BJ (cell line): ENCODE measurements at regions of chr1 and their contacts with region 1.

Region 1: DNA sequence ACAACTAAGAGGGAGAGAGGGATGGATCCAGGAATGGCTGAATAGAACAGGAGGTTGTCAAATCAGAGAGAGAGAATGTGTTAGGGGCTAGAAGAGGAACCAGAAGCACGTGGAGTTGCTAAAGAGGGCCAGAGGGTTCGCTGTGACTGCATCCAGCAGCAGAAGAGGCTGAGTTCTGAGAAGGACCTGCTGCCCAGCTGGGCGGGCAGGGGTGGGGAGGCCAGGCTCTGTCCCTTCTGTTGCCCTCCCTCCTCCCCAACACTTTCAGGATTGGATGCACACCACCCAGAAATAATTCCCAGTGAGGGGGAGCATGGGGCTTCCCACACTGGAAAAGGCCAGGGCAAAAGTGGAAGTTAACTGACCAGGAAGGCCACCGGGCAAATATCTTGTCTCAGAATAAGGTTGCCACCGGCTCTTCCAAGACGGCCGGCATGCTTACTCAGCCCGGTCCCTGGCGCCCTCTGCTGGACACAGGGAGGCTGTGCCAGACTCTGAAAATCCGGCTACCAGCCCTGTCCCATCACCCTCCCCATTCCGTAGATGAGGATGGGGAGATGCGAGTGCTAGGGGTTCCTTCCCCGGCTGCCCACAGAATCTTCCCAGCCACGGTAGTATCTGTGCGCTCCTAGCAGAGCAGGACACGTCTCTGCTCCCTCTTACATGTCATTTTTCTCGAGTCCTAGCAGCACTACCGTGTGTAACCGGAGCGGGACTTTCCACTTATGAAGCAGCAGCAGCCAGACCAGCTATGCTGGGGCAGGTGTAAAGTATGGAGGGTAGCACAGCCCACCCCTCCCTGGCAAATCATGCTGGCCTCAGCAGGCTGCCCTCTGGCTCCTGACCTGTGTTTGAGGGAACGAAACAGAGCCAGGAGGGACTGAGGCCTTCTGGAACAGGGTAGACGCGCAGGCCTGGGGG is 46.8 kb upstream of the A3GALT2 start:
- DNase-seq: no peak
- H3K4me3 ChIP-seq: no peak overlapping the region
- H3K27me3 ChIP-seq: no peaks in the 10 kb centered on the region
- CTCF ChIP-seq: peak; percentile 97

Region 2: GRCh38 chr1:33349778-33350610 is 17.8 kb before region 1 on chr1:
- CTCF ChIA-PET with region 1: interaction called, 8 read pairs
- POLR2A ChIA-PET with region 1: interaction called, 10 read pairs
- DNase-seq: no peak
- H3K4me3 ChIP-seq: peak overlapping the region; percentile 82
- H3K27me3 ChIP-seq: no peaks in the 10 kb centered on the region
- CTCF ChIP-seq: no peak

Region 3: GRCh38 chr1:33388805-33389771 is 21.3 kb after region 1 on chr1:
- CTCF ChIA-PET with region 1: interaction called, 10 read pairs
- POLR2A ChIA-PET with region 1: no interaction called
- DNase-seq: peak; percentile 77
- H3K4me3 ChIP-seq: no peak overlapping the region
- H3K27me3 ChIP-seq: no peaks in the 10 kb centered on the region
- CTCF ChIP-seq: no peak

Region 4: DNA sequence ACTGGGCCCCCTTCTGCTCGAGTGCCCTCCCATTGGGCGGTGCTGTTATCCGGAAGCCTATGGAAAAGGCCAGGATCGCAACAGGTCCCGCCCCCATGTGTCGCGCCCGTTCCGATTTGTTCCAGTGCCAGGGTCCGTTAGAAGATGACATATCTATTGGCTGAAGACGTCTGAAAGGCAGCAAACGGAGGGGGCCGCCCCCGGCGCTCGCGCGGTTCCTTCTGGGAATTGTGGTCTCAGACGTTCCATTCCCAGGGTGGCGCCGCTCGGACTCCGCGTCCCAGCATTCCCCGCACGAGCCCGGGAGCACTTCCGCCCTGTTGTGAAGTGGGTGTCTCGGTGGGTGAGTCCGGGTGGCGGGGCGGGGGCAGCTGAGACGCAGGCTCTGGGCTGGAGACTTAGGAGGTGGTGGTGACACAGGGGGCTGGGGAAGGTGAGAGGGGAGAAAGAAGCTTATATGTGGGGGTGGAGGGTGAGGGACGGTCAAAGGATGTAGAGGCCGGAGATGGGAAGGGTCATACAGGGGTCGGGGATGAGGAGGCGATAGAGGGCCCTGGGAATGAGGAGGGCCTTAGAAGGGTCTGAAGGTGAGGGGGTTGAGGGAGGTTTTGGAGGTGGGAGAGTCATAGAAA is 104.7 kb after region 1 on chr1 and contains the start of gene ZSCAN20:
- CTCF ChIA-PET with region 1: interaction called, 65 read pairs
- POLR2A ChIA-PET with region 1: no interaction called
- DNase-seq: peak; percentile 94
- H3K4me3 ChIP-seq: peak within 1 kb of the TSS; percentile 66
- H3K27me3 ChIP-seq: no peaks in the 10 kb centered on the region
- CTCF ChIP-seq: no peak
- polyA plus RNA-seq, gene ZSCAN20: 2.9 and 3.4 TPM in 2 replicates

Region 5: DNA sequence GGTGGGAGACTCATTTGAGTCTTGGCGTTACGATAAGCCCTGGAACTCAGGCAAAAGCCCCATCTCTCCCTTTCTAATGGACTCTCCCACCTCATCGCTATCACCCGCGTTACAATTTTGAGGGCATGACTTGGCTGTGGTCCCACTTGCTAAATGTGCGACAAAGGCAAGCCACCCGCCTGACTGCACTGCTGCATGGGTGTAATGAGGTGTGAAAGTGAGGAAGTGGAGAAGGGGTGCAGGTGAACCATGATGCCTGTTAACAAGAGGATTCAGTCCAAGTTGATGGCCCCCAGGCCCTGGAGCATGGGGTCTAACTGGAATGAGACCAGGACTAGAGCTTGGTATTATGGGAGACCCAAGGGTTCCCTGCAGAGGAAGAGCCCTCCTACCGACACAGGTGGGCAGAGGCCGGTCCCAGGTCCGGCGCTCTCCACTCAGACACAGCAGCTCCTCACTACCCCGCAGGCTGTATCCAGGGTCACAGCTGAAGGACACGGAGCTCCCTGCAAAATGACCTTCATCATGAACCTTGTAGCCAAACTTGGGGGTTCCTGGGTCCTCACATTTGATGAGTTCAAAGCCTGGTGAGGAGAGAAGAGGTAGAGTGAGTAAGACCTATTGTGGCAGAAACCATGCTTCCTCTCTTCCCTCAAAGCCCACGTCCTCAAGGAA is 330.8 kb after region 1 on chr1:
- CTCF ChIA-PET with region 1: no interaction called
- POLR2A ChIA-PET with region 1: no interaction called
- DNase-seq: no peak
- H3K4me3 ChIP-seq: no peak overlapping the region
- H3K27me3 ChIP-seq: no peaks in the 10 kb centered on the region
- CTCF ChIP-seq: no peak